ENCODE measurements at regions of chr17 and their contacts with region 1.

Region 1: DNA sequence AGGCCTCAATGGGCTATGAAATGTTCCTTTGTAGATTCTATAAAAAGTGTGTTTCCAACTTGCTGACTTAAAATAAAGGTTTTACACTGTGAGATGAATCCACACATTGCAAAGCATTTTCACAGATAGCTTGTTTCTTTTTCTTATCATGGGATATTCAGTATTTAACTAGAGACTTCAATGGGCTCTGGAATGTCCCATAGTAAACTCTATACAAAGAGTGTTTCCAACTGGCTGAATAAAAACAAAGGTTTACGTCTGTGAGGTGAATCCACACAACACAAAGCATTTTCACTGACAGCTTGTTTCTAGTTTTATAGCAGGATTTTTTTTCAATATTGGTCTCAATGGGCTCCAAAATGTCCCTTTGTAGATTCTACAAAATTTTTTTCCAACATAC is 550.1 kb downstream of the KCNJ18 start:
- DNase-seq: no peak
- ATAC-seq: no peak
- H3K4me3 ChIP-seq: no peak overlapping the region
- H3K4me3 Mint-ChIP-seq: no peak overlapping the region
- H3K27ac ChIP-seq: no peak overlapping the region
- H3K27ac Mint-ChIP-seq: no peak overlapping the region
- H3K4me1 ChIP-seq: no peaks in the 10 kb centered on the region
- H3K4me1 Mint-ChIP-seq: no peaks in the 10 kb centered on the region
- H3K27me3 ChIP-seq: no peaks in the 10 kb centered on the region
- H3K27me3 Mint-ChIP-seq: no peaks in the 10 kb centered on the region
- CTCF ChIP-seq: no peak

Region 2: GRCh38 chr17:22123536-22124281 is 118.8 kb before region 1 on chr17:
- CTCF ChIA-PET with region 1: no interaction called
- POLR2A ChIA-PET with region 1: no interaction called
- intact Hi-C with region 1: no loop called
- DNase-seq: no peak
- ATAC-seq: no peak
- H3K4me3 ChIP-seq: no peak overlapping the region
- H3K4me3 Mint-ChIP-seq: no peak overlapping the region
- H3K27ac ChIP-seq: no peak overlapping the region
- H3K27ac Mint-ChIP-seq: no peak overlapping the region
- H3K4me1 ChIP-seq: no peaks in the 10 kb centered on the region
- H3K4me1 Mint-ChIP-seq: no peaks in the 10 kb centered on the region
- H3K27me3 ChIP-seq: no peaks in the 10 kb centered on the region
- H3K27me3 Mint-ChIP-seq: no peaks in the 10 kb centered on the region
- CTCF ChIP-seq: no peak

Region 3: DNA sequence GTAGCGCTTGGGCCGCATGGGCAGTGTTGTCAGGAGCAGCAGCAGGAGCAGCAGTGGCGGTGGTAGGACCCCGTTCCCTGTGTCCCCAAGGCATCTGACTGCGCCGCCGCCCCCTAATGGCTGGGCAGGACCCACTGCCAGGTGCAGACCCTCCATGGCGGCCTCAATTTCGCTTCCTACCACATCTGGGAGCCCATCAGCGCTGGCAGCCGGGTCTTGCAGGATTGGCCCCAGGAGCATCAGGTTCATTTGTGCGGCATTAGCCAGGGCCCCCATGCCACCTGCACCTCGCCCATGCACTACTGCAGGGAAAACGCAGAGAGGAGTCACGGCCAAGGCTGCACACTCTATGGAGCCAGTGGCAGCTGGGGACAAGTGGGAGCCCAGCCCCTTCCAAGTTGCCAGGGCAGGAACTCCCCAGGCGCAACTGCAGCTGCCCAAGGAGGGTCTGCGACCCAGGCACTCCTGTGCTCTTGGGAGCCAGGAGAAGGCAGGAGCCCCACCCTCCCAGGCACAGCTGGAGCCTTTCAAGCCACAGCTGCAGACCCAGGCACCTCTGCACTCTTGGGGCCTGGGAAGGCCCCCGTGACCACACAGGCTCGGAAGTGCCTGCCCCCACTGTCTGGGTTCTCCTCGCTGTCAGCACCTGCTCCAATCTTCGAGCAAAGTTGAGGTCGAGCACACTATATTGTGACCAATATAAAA is 44.0 kb after region 1 on chr17:
- CTCF ChIA-PET with region 1: no interaction called
- POLR2A ChIA-PET with region 1: no interaction called
- intact Hi-C with region 1: loop called in 1 of 2 experiments (anchors 10 kb)
- DNase-seq: peak in 1 of 14 experiments; percentile 3
- ATAC-seq: no peak
- H3K4me3 ChIP-seq: no peak overlapping the region
- H3K4me3 Mint-ChIP-seq: no peak overlapping the region
- H3K27ac ChIP-seq: no peak overlapping the region
- H3K27ac Mint-ChIP-seq: no peak overlapping the region
- H3K4me1 ChIP-seq: no peaks in the 10 kb centered on the region
- H3K4me1 Mint-ChIP-seq: no peaks in the 10 kb centered on the region
- H3K27me3 ChIP-seq: no peaks in the 10 kb centered on the region
- H3K27me3 Mint-ChIP-seq: no peaks in the 10 kb centered on the region
- CTCF ChIP-seq: no peak

Region 4: DNA sequence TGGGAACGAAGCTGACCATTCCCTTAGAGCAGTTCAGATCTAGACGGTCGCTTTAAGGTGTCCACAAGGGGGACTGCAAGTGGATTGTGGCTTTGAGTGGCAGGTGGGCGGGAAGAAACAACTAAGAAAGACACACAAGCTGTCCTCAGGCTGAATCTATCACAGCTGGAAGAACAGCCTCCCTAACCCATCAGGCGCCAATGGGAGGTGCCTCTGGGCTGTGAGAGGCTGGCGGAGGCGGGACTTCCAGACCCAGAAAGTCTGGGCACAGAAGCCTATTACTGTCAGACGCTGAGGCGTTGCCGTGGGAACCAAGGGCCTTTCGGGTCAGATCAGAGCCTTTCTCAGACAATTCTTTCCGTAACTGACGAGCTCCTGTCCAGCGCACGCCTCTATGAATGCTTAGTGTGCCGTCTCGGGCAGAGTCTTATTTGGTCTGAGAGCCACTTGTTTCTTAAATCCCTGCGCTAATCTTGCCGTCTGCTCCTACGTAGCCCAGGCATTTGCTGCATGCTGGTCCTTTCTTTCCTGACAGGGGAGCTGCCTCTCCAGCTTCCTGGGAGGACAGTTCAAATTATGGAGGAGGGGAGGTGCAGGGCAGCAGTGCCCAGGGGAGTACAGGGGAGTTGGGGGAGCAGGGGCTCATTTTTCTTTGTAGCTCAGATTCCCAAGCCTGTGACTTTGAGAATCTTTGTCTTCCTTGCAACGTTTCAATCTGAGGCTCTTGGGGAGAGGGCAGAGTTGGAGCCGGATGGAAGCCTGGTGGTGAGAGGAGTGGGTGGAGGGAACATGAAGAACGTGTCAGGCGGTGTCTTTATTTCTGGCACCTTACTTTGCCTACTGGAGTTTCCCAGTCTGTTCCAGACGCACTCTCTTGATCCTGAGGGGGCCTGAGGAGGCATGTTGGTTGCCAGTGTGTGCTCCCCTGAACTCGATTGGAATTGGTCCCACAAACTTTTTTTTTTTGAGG is 68.5 kb after region 1 on chr17:
- CTCF ChIA-PET with region 1: no interaction called
- POLR2A ChIA-PET with region 1: no interaction called
- intact Hi-C with region 1: no loop called
- DNase-seq: no peak
- ATAC-seq: no peak
- H3K4me3 ChIP-seq: no peak overlapping the region
- H3K4me3 Mint-ChIP-seq: no peak overlapping the region
- H3K27ac ChIP-seq: no peak overlapping the region
- H3K27ac Mint-ChIP-seq: no peak overlapping the region
- H3K4me1 ChIP-seq: no peaks in the 10 kb centered on the region
- H3K4me1 Mint-ChIP-seq: no peaks in the 10 kb centered on the region
- H3K27me3 ChIP-seq: no peaks in the 10 kb centered on the region
- H3K27me3 Mint-ChIP-seq: no peaks in the 10 kb centered on the region
- CTCF ChIP-seq: no peak

Region 5: DNA sequence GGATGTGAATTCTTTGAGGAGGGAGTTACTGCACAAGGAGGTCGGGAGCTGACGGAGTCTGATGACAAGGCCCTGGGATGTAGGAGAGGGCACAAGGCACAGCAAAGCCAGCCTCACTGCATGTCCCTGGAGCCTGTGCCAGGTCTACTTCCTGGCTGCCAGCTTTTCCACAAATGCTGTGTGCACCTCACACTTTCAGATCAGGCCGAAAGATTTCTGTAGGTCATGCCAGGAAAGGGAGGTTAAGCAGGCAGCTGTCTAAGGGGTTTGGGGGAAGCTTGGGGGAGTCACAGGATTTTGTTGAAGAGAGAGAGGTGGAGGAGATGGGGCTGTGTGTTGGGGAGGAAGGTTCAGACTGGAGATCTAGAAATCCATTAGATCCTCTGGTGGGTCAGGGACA is 242.4 kb after region 1 on chr17:
- CTCF ChIA-PET with region 1: no interaction called
- POLR2A ChIA-PET with region 1: no interaction called
- intact Hi-C with region 1: no loop called
- DNase-seq: no peak
- ATAC-seq: no peak
- H3K4me3 ChIP-seq: no peak overlapping the region
- H3K4me3 Mint-ChIP-seq: no peak overlapping the region
- H3K27ac ChIP-seq: no peak overlapping the region
- H3K27ac Mint-ChIP-seq: no peak overlapping the region
- H3K4me1 ChIP-seq: no peaks in the 10 kb centered on the region
- H3K4me1 Mint-ChIP-seq: no peaks in the 10 kb centered on the region
- H3K27me3 ChIP-seq: no peaks in the 10 kb centered on the region
- H3K27me3 Mint-ChIP-seq: no peaks in the 10 kb centered on the region
- CTCF ChIP-seq: no peak

Measured in CD4-positive, alpha-beta T cell (primary cell).